ENCODE measurements at regions of chr5 and their contacts with region 1.

Region 1: DNA sequence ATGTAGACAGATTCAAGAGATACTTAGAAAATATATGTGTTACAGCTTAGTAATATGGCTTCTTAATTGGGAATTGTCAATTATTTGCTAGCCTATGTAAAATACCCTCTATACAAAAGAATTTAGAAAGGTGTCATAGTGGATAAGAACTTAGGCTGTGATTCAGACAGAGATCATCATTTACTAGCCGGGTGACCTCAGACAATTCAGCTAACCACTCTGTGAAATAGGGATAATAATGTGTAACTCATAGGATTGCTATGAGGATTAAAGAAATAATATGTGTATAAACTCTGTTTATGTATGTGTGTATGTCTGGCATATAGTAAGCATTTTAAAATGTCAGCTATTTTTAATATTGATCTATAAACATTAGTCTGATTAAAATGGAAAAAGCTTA is 5.9 kb upstream of the LARS1 start:
- DNase-seq: no peak
- H3K4me3 ChIP-seq: no peak overlapping the region
- H3K27ac ChIP-seq: no peak overlapping the region
- H3K4me1 ChIP-seq: no peaks in the 10 kb centered on the region
- H3K27me3 ChIP-seq: no peaks in the 10 kb centered on the region
- CTCF ChIP-seq: no peak
- POLR2A ChIP-seq: no peak

Region 2: GRCh38 chr5:146165460-146165859 is 22.9 kb before region 1 on chr5:
- intact Hi-C with region 1: no loop called
- DNase-seq: no peak
- H3K4me3 ChIP-seq: no peak overlapping the region
- H3K27ac ChIP-seq: no peak overlapping the region
- H3K4me1 ChIP-seq: no peaks in the 10 kb centered on the region
- H3K27me3 ChIP-seq: no peaks in the 10 kb centered on the region
- CTCF ChIP-seq: no peak
- POLR2A ChIP-seq: no peak

Region 3: GRCh38 chr5:146203011-146203871 is 14.9 kb after region 1 on chr5 and contains the start of gene RBM27:
- intact Hi-C with region 1: loop called (anchors 1 kb)
- DNase-seq: peak; percentile 96 to 97
- H3K4me3 ChIP-seq: peak within 1 kb of the TSS; percentile 72 to 92 (median 87)
- H3K27ac ChIP-seq: peak within 1 kb of the TSS; percentile 90 to 94
- H3K4me1 ChIP-seq: peaks cover 0 to 4% of the 10 kb centered on the region in 2 donors
- H3K27me3 ChIP-seq: no peaks in the 10 kb centered on the region
- CTCF ChIP-seq: no peak
- POLR2A ChIP-seq: peak; percentile 46
- total RNA-seq, gene RBM27: 20.6 to 32.3 (median 31.8) TPM

Region 4: GRCh38 chr5:146499680-146500079 is 311.3 kb after region 1 on chr5:
- intact Hi-C with region 1: no loop called
- DNase-seq: no peak
- H3K4me3 ChIP-seq: no peak overlapping the region
- H3K27ac ChIP-seq: no peak overlapping the region
- H3K4me1 ChIP-seq: no peaks in the 10 kb centered on the region
- H3K27me3 ChIP-seq: no peaks in the 10 kb centered on the region
- CTCF ChIP-seq: no peak
- POLR2A ChIP-seq: no peak